Calu3 (cell line): ENCODE measurements at regions of chr19 and their contacts with region 1.

Region 1: GRCh38 chr19:49786376-49786820 is 19.6 kb downstream of the AP2A1 start:
- DNase-seq: no peak
- H3K4me3 Mint-ChIP-seq: no peak overlapping the region
- H3K27ac Mint-ChIP-seq: peak overlapping the region; percentile 15
- H3K4me1 Mint-ChIP-seq: peaks cover 9% of the 10 kb centered on the region
- H3K27me3 Mint-ChIP-seq: no peaks in the 10 kb centered on the region
- CTCF ChIP-seq: no peak

Region 2: GRCh38 chr19:48053856-48054255 is 1732.5 kb before region 1 on chr19:
- CTCF ChIA-PET with region 1: interaction called, 10 read pairs
- intact Hi-C with region 1: no loop called
- DNase-seq: no peak
- H3K4me3 Mint-ChIP-seq: no peak overlapping the region
- H3K27ac Mint-ChIP-seq: no peak overlapping the region
- H3K4me1 Mint-ChIP-seq: no peaks in the 10 kb centered on the region
- H3K27me3 Mint-ChIP-seq: peaks cover 64% of the 10 kb centered on the region
- CTCF ChIP-seq: no peak

Region 3: DNA sequence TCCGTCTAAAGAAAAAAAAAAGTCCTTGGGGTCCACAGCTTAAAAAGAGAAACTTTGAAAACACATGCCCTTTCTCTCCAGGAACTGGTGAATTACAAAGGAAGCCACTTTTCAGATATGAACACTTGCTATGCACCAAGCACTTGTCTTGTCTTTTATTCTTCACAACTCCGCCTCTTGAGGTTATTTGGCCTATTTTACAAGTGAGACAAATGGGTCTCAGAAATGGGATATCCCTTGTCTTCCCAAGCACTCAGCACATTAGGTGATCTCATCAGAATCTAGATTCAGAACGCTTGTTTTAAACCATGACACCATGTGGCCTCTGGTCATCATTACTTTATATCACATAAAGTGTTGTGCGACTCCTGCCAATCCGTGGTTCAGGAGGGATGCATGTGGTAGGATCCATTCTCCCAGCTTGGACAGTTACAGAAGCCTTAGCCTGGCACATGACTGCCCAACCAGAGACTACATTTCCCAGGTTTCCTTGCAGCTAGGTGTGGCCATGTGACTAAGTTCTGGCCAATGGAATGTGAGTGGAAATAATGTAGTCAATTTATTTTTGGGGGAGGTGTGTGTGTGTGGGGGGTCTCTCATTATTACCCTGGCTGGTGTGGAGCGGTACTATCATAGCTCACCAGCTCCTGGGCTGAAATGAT is 37.2 kb before region 1 on chr19:
- CTCF ChIA-PET with region 1: no interaction called
- intact Hi-C with region 1: no loop called
- DNase-seq: no peak
- H3K4me3 Mint-ChIP-seq: no peak overlapping the region
- H3K27ac Mint-ChIP-seq: no peak overlapping the region
- H3K4me1 Mint-ChIP-seq: no peaks in the 10 kb centered on the region
- H3K27me3 Mint-ChIP-seq: no peaks in the 10 kb centered on the region
- CTCF ChIP-seq: no peak